ENCODE measurements at regions of chr1 and their contacts with region 1.

Region 1: GRCh38 chr1:181479137-181479745 is 4.1 kb upstream of the CACNA1E start:
- DNase-seq: peak; percentile 76
- CTCF ChIP-seq: peak; percentile 92

Region 2: GRCh38 chr1:181257117-181257516 is 222.1 kb before region 1 on chr1:
- in situ Hi-C with region 1: no loop called
- DNase-seq: peak; percentile 20
- CTCF ChIP-seq: no peak

Region 3: GRCh38 chr1:181296180-181296579 is 183.1 kb before region 1 on chr1:
- in situ Hi-C with region 1: no loop called
- DNase-seq: no peak
- CTCF ChIP-seq: no peak

Region 4: DNA sequence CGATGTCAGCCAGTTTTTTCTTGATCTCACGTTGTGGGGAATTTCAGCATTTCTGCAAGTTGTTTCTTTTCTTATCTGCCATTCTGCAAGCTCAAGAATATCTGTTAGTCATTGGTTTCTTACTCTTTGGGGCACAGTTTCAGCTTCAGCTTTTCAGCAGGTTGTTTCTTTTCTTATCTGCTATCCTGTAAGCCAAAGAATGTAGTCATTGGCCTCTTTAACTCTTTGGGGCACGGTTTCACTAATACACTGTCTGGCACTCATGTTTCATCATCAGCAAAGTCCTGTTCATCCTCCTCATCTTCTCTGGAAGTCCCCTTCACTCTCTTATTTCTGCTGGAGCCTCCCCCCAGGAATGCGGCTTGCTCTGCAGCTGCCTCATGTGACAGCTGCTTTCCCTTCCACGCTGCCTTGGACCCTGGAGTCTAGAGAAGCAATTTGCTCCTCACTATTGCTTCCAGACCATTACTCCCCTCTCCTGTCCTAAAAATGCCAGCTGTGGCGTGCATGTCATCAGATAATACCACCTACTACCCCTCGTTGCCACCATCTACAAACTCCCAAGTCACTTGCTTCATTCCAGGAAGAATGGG is 62.9 kb before region 1 on chr1:
- in situ Hi-C with region 1: no loop called
- DNase-seq: no peak
- CTCF ChIP-seq: no peak

Region 5: GRCh38 chr1:181676269-181676668 is 197.0 kb after region 1 on chr1:
- in situ Hi-C with region 1: loop called (anchors 10 kb)
- DNase-seq: peak; percentile 75
- CTCF ChIP-seq: peak; percentile 26

Region 6: GRCh38 chr1:181936768-181937581 is 457.7 kb after region 1 on chr1:
- in situ Hi-C with region 1: loop called (anchors 10 kb)
- DNase-seq: peak; percentile 73
- CTCF ChIP-seq: peak; percentile 77

Region 7: GRCh38 chr1:182046763-182047162 is 567.5 kb after region 1 on chr1:
- in situ Hi-C with region 1: loop called (anchors 5 kb)
- DNase-seq: no peak
- CTCF ChIP-seq: no peak

Region 8: DNA sequence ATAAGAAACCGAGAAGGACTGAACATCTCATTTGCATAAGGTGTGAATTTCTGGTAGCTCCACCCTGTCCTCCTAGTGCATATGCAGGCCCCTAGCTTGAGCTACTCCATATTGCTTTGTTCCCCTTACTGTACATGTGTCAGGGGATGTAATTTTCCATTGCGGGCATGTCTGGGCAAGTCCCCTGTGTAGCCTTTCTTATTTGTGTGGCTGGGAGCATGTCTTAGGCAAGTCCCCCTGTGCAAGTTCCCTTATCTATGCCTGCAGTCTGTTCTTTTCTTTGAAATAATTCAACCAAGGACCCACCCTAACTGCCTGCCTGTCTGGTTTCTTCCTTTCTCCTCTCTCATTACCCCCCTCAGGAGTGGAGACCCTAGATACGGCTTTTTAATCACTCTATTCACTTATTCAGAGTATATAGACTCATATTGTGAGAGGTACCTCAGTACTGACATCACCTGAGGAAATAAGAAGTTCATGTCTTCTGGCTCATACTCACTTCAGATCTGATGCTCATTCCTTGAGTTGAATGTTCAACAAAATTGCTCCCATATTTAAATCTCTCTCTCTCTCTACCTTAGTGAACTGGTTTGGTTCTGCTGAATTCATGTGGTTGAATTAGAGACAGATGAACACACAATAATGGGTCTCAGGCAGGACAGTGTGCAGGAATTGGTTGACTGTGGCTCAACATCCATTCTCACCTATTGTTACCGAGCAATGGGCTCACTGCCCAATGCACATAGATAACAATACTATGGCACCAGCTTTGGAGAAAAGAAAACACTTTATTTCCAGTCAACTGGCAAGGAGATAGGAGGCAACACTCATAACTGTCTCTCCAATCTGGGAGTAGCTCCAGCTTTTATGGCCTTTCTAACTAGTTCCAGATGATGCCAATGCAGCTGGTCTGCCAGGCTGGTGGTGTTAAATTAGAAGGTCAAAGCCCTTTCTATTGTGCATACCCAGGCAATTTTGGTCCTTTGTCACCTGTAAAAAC is 1282.5 kb after region 1 on chr1:
- in situ Hi-C with region 1: no loop called
- DNase-seq: no peak
- CTCF ChIP-seq: no peak

Measured in GM13976 (cell line).